ENCODE measurements at regions of chr2 and their contacts with region 1.

Region 1: DNA sequence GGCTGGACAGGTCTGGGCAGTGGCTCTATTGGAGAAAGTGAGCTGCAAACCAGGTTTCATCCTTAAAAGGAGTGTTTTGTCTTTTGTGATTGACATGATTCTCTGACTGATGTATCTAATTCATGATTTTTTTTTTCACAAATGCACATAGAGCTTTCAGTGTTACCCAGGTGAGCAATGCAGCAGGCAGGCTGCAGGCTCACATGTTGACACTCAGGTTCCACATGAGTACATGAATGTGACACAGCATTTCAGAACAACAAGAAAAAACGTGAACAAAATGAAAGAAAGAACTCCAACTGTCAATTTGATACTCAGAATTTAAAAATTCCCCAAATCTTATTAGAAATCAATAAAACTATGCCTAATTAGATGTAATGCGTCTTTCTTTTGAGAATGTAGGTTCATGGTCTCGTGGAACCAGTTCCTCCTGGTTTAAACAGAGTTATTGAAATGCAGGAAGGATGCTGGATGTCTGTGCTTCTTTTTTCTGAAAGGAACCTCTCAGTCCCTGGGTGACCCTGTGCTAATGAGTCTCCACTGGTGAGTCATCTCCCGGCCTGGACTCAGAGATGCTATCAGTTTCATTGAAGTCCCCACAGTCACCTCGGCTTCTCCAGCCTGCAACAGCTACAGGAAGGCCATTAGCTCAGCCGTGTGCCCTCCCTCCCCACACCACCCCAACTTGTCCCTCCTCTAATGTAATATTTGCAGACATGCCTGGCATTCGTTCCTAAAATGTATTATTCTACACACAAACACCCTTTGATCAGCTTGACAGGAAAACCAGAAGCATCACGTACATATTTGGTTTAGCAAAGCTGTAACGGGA is 430.4 kb downstream of the LPIN1 start:
- DNase-seq: peak in 2 of 9 experiments; percentile 27 to 31
- ATAC-seq: peak; percentile 30
- H3K4me3 ChIP-seq: no peak overlapping the region
- H3K4me3 Mint-ChIP-seq: peak overlapping the region; percentile 66
- H3K27ac ChIP-seq: no peak overlapping the region
- H3K27ac Mint-ChIP-seq: peak overlapping the region; percentile 69
- H3K4me1 ChIP-seq: peaks cover 27% of the 10 kb centered on the region
- H3K4me1 Mint-ChIP-seq: peaks cover 50% of the 10 kb centered on the region
- H3K27me3 ChIP-seq: no peaks in the 10 kb centered on the region
- H3K27me3 Mint-ChIP-seq: no peaks in the 10 kb centered on the region
- CTCF ChIP-seq: no peak

Region 2: GRCh38 chr2:12120281-12121150 is 56.3 kb before region 1 on chr2:
- CTCF ChIA-PET with region 1: no interaction called
- POLR2A ChIA-PET with region 1: no interaction called
- intact Hi-C with region 1: loop called in 1 of 2 experiments (anchors 10 kb)
- DNase-seq: no peak
- ATAC-seq: no peak
- H3K4me3 ChIP-seq: no peak overlapping the region
- H3K4me3 Mint-ChIP-seq: no peak overlapping the region
- H3K27ac ChIP-seq: no peak overlapping the region
- H3K27ac Mint-ChIP-seq: no peak overlapping the region
- H3K4me1 ChIP-seq: peaks cover under 1% of the 10 kb centered on the region
- H3K4me1 Mint-ChIP-seq: no peaks in the 10 kb centered on the region
- H3K27me3 ChIP-seq: no peaks in the 10 kb centered on the region
- H3K27me3 Mint-ChIP-seq: no peaks in the 10 kb centered on the region
- CTCF ChIP-seq: no peak

Region 3: DNA sequence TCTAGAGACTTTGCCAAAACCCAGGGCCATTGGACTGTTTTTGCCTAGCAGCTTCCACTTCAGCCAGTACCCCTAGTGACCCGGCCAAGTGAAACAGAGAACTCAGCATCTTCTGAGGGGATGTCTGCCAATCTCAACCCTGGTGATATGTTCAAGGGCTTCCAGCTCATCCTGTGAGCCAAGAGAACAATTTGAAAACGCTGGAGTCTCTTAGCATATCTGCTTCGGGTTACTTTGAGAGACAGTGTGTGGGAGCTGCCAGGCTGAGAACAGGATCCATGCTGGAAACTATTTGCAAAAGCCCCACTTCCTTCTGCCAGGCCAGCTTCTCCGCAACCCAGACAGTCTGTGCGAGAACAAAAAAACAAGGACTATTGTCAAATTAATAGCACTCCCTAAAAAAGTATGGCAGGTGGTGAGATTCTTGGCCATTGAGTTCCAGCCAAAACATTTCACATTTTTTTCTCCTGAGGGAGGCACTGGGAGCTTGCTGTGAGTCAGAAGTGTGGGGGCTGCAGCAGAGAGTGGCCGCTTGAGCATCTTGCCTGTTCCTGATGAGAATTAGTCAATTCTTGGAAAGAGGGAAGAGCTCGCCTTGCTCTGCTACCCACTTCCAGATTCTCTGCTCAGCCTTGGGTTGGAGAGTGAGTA is 144.3 kb after region 1 on chr2:
- CTCF ChIA-PET with region 1: no interaction called
- POLR2A ChIA-PET with region 1: no interaction called
- intact Hi-C with region 1: loop called in 1 of 2 experiments (anchors 10 kb)
- DNase-seq: no peak
- ATAC-seq: no peak
- H3K4me3 ChIP-seq: no peak overlapping the region
- H3K4me3 Mint-ChIP-seq: no peak overlapping the region
- H3K27ac ChIP-seq: no peak overlapping the region
- H3K27ac Mint-ChIP-seq: no peak overlapping the region
- H3K4me1 ChIP-seq: no peaks in the 10 kb centered on the region
- H3K4me1 Mint-ChIP-seq: no peaks in the 10 kb centered on the region
- H3K27me3 ChIP-seq: no peaks in the 10 kb centered on the region
- H3K27me3 Mint-ChIP-seq: no peaks in the 10 kb centered on the region
- CTCF ChIP-seq: no peak

Region 4: DNA sequence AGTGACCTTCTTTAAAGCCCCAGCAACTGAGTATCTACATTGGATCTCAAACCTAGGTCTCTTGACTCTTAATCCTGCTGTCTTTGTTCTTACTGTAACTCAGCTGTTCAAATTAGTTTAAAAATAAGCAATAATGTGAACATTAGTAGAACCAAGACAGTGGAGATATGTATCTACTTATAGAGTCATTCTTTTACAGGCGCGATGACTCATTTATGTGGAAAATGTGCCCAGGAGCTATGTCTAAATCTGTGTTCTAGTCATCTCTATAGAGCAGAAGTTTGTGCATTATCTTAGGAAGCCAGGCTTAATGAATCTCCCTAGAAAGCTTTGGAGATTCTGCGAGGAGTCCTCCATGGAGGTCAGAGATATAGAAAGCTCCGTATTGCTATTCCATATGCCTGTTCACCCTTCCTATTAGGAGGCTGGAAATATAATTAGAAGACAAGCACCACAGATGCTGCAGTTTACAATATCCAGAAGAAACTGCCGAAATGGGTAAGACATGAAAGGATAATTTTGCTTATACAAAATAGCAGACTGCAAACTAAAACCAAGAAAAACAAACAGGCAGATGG is 751.4 kb after region 1 on chr2:
- CTCF ChIA-PET with region 1: no interaction called
- POLR2A ChIA-PET with region 1: no interaction called
- intact Hi-C with region 1: no loop called
- DNase-seq: no peak
- ATAC-seq: no peak
- H3K4me3 ChIP-seq: no peak overlapping the region
- H3K4me3 Mint-ChIP-seq: no peak overlapping the region
- H3K27ac ChIP-seq: no peak overlapping the region
- H3K27ac Mint-ChIP-seq: no peak overlapping the region
- H3K4me1 ChIP-seq: no peaks in the 10 kb centered on the region
- H3K4me1 Mint-ChIP-seq: no peaks in the 10 kb centered on the region
- H3K27me3 ChIP-seq: no peaks in the 10 kb centered on the region
- H3K27me3 Mint-ChIP-seq: peaks cover 2% of the 10 kb centered on the region
- CTCF ChIP-seq: no peak